ENCODE measurements at regions of chr10 and their contacts with region 1.

Region 1: GRCh38 chr10:129030996-129031843 is 435.8 kb upstream of the MGMT start:
- DNase-seq: peak; percentile 60 to 74
- ATAC-seq: peak; percentile 85 to 89 (median 87)
- H3K4me3 ChIP-seq: no peak overlapping the region
- H3K27ac ChIP-seq: no peak overlapping the region
- H3K4me1 ChIP-seq: no peaks in the 10 kb centered on the region
- H3K27me3 ChIP-seq: peaks cover 0 to 79% (median 6%) of the 10 kb centered on the region in 3 donors
- CTCF ChIP-seq: peak; percentile 95

Region 2: GRCh38 chr10:129207297-129207696 is 176.1 kb after region 1 on chr10:
- intact Hi-C with region 1: no loop called
- DNase-seq: no peak
- ATAC-seq: peak in 2 of 4 donors; percentile 54 to 71
- H3K4me3 ChIP-seq: no peak overlapping the region
- H3K27ac ChIP-seq: no peak overlapping the region
- H3K4me1 ChIP-seq: no peaks in the 10 kb centered on the region
- H3K27me3 ChIP-seq: no peaks in the 10 kb centered on the region
- CTCF ChIP-seq: no peak

Region 3: DNA sequence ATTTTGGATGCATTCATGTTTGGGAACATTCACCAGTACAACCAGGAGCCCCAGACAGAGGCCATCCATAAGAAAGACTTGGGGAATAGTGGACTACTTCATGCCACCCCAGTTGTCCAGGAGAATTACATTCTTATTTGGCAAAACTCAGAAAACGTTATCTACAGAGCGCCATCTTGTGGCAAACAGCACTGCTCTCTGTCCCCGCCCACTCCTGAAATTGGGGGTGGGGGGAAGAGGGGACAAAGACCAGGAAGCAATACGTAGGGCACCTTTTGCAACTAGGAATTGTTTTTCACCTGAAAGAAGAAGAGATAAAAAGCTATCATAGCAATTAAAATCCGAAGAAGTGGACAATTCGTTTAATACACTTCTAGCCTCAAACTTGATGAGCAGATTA is 301.3 kb after region 1 on chr10:
- intact Hi-C with region 1: loop called in 1 of 2 experiments (anchors 5 kb)
- DNase-seq: no peak
- ATAC-seq: no peak
- H3K4me3 ChIP-seq: no peak overlapping the region
- H3K27ac ChIP-seq: no peak overlapping the region
- H3K4me1 ChIP-seq: no peaks in the 10 kb centered on the region
- H3K27me3 ChIP-seq: peaks cover 0 to 6% (median 0%) of the 10 kb centered on the region in 3 donors
- CTCF ChIP-seq: peak; percentile 36

Region 4: GRCh38 chr10:129545261-129545660 is 514.0 kb after region 1 on chr10:
- intact Hi-C with region 1: loop called in 1 of 2 experiments (anchors 10 kb)
- DNase-seq: no peak
- ATAC-seq: no peak
- H3K4me3 ChIP-seq: no peak overlapping the region
- H3K27ac ChIP-seq: no peak overlapping the region
- H3K4me1 ChIP-seq: peaks cover 42% of the 10 kb centered on the region
- H3K27me3 ChIP-seq: no peaks in the 10 kb centered on the region
- CTCF ChIP-seq: no peak

Region 5: DNA sequence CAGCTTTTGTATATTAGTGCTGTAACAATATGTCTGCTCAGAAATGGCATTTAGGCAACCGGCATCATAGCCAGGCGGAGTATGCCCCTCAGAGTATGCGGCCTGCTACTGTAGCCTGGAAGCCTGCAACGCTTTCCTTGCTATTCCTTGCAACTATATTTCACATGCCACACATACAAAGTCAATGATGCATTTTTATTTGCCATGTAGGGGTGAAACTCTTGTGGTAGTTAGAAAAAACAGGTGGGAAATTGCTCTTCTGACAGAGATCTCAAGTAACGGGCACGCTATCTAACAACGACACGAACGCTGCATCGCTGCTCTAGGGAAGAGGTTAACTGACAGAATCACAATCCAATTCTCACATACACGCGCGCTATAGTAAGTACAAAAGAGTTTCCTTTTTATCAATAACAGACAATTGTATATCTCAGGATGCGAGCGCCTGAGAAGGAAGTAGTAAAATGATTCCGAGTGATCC is 927.0 kb after region 1 on chr10:
- intact Hi-C with region 1: loop called in 1 of 2 experiments (anchors 5 kb)
- DNase-seq: peak in 1 of 2 donors; percentile 66
- ATAC-seq: peak; percentile 50 to 67 (median 58)
- H3K4me3 ChIP-seq: peak overlapping the region; percentile 83
- H3K27ac ChIP-seq: peak overlapping the region; percentile 94
- H3K4me1 ChIP-seq: peaks cover 40% of the 10 kb centered on the region
- H3K27me3 ChIP-seq: peaks cover 0 to 42% (median 1%) of the 10 kb centered on the region in 3 donors
- CTCF ChIP-seq: peak; percentile 57

Measured in psoas muscle (tissue), 8 donors.